Dendritic cell treated with granulocyte-macrophage colony-stimulating factor and Interleukin-4, amounts not matched to agents 40 ng/mL and 50 ng/mL, for 4 days (primary cell): ENCODE measurements at regions of chr5 and their contacts with region 1.

Region 1: GRCh38 chr5:78359831-78360673 is at the start of gene SCAMP1:
- H3K4me3 Mint-ChIP-seq: peak within 1 kb of the TSS; percentile 93
- H3K27ac Mint-ChIP-seq: peak within 1 kb of the TSS; percentile 97
- H3K4me1 Mint-ChIP-seq: peaks cover 41% of the 10 kb centered on the region
- H3K27me3 Mint-ChIP-seq: no peaks in the 10 kb centered on the region

Region 2: GRCh38 chr5:78221964-78222451 is 138.0 kb before region 1 on chr5:
- intact Hi-C with region 1: loop called (anchors 5 kb)
- H3K4me3 Mint-ChIP-seq: peak overlapping the region; percentile 66
- H3K27ac Mint-ChIP-seq: peak overlapping the region; percentile 83
- H3K4me1 Mint-ChIP-seq: peaks cover 28% of the 10 kb centered on the region
- H3K27me3 Mint-ChIP-seq: no peaks in the 10 kb centered on the region

Region 3: GRCh38 chr5:78294248-78295034 is 65.6 kb before region 1 on chr5 and contains the start of gene AP3B1:
- intact Hi-C with region 1: loop called (anchors 1 kb)
- H3K4me3 Mint-ChIP-seq: peak within 1 kb of the TSS; percentile 98
- H3K27ac Mint-ChIP-seq: peak within 1 kb of the TSS; percentile 100
- H3K4me1 Mint-ChIP-seq: peaks cover 50% of the 10 kb centered on the region
- H3K27me3 Mint-ChIP-seq: peaks cover 3% of the 10 kb centered on the region

Region 4: GRCh38 chr5:78527054-78527859 is 167.2 kb after region 1 on chr5:
- intact Hi-C with region 1: loop called (anchors 5 kb)
- H3K4me3 Mint-ChIP-seq: peak overlapping the region; percentile 6
- H3K27ac Mint-ChIP-seq: peak overlapping the region; percentile 92
- H3K4me1 Mint-ChIP-seq: peaks cover 68% of the 10 kb centered on the region
- H3K27me3 Mint-ChIP-seq: no peaks in the 10 kb centered on the region